Gastrocnemius medialis (tissue), 4 donors: ENCODE measurements at regions of chr11 and their contacts with region 1.

Region 1: DNA sequence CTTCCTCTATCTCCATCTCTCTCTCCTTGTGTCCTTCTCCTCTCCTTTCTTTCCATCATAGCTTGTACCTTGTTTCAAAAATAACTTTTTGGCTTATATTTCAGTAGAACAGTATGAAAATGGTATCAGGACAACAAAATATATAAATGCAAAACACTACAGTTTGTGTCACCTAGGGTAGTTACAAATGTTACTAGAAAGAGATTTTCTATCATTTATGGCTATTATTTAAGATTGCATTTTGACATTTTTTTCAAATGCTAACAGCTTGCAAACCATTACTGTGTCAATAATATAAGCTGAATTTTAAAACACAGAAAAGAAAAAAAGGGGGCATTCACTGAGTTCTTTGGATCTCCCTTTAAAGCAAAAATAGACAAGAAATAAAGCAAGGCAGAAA is 392.3 kb upstream of the LRRC4C start:
- DNase-seq: no peak
- ATAC-seq: no peak
- H3K4me3 ChIP-seq: no peak overlapping the region
- H3K27ac ChIP-seq: no peak overlapping the region
- H3K4me1 ChIP-seq: no peaks in the 10 kb centered on the region
- H3K27me3 ChIP-seq: no peaks in the 10 kb centered on the region
- CTCF ChIP-seq: no peak
- POLR2A ChIP-seq: no peak

Region 2: GRCh38 chr11:41917900-41918299 is 66.2 kb after region 1 on chr11:
- in situ Hi-C with region 1: loop called in 1 of 4 experiments (anchors 10 kb)
- intact Hi-C with region 1: no loop called
- DNase-seq: no peak
- ATAC-seq: no peak
- H3K4me3 ChIP-seq: no peak overlapping the region
- H3K27ac ChIP-seq: no peak overlapping the region
- H3K4me1 ChIP-seq: no peaks in the 10 kb centered on the region
- H3K27me3 ChIP-seq: no peaks in the 10 kb centered on the region
- CTCF ChIP-seq: no peak
- POLR2A ChIP-seq: no peak

Region 3: DNA sequence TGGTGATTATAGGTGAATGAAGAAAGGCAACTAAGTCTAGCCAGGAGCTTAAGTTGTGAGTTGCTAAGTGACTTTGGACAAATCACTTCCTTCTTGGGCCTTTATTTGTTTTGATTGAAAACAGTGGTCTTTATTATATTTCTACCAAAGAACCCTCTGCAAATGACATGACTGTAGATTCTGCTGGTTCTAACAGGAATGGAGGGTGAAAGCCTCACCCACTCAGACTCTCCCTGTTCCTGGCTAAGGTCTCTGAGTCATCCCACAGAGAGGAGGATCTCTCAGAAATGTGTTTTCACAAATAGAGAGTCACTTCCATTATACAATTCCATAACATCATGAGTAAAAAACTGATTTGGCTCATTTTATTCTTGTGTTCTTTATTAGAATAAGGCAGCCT is 191.6 kb after region 1 on chr11:
- in situ Hi-C with region 1: no loop called
- intact Hi-C with region 1: no loop called
- DNase-seq: no peak
- ATAC-seq: no peak
- H3K4me3 ChIP-seq: no peak overlapping the region
- H3K27ac ChIP-seq: no peak overlapping the region
- H3K4me1 ChIP-seq: no peaks in the 10 kb centered on the region
- H3K27me3 ChIP-seq: no peaks in the 10 kb centered on the region
- CTCF ChIP-seq: no peak
- POLR2A ChIP-seq: no peak

Region 4: DNA sequence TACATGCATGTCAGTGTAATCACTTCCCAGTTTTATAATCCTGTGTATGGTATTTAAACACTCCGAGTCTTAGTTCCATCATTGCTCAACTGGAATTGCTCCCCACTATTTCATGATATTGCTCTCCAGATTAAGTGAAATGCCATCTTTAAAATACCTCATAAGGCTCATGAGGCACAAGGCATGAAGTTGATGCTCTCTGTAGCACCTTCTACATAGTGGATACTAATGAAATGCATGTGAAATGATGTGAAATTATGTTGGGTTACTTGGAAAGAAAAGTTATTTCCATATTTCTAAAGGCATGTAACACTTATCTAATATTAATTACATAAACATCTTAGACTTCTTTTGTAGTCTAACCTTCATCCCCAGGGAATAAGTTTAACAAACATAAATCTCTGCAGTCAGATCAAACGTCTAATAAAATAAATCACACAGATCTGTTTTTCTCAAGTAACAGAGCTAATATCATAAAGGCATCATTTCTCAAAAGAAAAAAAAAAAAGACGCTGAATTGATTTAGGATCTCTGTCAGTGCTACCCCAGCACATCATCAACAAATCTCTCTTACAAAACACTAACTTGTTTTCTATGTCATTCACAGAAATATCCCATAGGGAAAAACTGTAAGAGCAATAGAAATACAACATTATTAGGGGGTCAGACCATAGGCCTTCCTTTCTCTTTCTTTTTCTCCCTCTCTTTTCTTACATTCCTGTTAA is 343.7 kb after region 1 on chr11:
- in situ Hi-C with region 1: no loop called
- intact Hi-C with region 1: no loop called
- DNase-seq: no peak
- ATAC-seq: no peak
- H3K4me3 ChIP-seq: no peak overlapping the region
- H3K27ac ChIP-seq: no peak overlapping the region
- H3K4me1 ChIP-seq: no peaks in the 10 kb centered on the region
- H3K27me3 ChIP-seq: no peaks in the 10 kb centered on the region
- CTCF ChIP-seq: no peak
- POLR2A ChIP-seq: no peak